Activated CD4-positive, alpha-beta T cell treated with anti-CD3 and anti-CD28 coated beads, Interleukin-2, amount 10 ng/mL, durations not matched to agents 24 days and 14 days (primary cell): ENCODE measurements at regions of chrX and their contacts with region 1.

Region 1: DNA sequence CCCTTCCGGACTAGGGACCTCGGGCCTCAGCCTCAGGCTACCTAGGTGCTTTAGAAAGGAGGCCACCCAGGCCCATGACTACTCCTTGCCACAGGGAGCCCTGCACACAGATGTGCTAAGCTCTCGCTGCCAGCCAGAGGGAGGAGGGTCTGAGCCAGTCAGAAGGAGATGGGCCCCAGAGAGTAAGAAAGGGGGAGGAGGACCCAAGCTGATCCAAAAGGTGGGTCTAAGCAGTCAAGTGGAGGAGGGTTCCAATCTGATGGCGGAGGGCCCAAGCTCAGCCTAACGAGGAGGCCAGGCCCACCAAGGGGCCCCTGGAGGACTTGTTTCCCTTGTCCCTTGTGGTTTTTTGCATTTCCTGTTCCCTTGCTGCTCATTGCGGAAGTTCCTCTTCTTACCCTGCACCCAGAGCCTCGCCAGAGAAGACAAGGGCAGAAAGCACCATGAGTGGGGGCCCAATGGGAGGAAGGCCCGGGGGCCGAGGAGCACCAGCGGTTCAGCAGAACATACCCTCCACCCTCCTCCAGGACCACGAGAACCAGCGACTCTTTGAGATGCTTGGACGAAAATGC is at the start of gene WAS:
- DNase-seq: peak; percentile 85
- H3K4me3 Mint-ChIP-seq: peak within 1 kb of the TSS; percentile 98
- H3K27ac Mint-ChIP-seq: peak within 1 kb of the TSS; percentile 98
- H3K4me1 Mint-ChIP-seq: peaks cover 43% of the 10 kb centered on the region
- H3K27me3 Mint-ChIP-seq: no peaks in the 10 kb centered on the region
- total RNA-seq, gene WAS: 99.0 and 104 TPM in 2 replicates

Region 2: DNA sequence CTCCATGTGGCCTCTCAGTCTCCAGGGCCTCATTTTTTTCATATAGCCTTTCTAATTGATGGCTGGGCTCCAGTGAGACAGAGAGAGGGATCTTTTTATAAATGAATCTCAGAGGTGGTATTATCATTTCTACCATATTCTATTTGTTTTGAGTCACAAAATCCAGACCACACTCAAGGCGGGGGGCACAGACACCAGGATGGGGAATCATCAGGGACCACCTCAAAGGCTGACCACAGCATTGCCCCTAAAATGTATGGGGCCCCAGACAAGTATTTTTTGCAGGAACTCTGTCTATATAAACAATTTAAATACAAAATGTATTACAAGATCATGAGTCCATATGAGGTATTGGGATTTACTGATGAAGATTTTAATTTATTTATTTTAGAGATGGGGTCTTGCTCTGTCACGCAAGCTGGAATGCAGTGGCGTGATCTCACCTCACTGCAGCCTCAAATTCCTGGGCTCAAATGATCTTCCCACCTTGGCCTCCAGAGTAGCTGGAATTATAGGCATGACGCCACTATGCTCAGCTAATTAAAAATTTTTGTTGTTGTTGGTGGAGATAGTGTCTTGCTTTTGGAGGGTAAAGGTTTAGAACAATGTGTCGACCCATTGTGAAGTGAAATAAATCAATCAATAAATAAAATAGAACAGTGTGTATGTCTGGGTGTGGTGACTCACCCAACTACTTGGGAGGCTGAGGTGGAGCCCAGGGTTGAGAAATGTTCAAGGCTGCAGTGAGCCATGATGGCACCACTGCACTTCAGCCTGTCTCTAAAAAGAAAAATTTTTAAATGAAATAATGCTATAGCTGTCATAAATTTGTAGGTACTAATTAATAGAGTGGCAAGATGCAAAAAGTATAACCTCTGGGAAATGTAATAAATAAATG is 56.8 kb before region 1 on chrX:
- intact Hi-C with region 1: no loop called
- DNase-seq: no peak
- H3K4me3 Mint-ChIP-seq: no peak overlapping the region
- H3K27ac Mint-ChIP-seq: no peak overlapping the region
- H3K4me1 Mint-ChIP-seq: no peaks in the 10 kb centered on the region
- H3K27me3 Mint-ChIP-seq: no peaks in the 10 kb centered on the region

Region 3: GRCh38 chrX:48696301-48697181 is 13.0 kb after region 1 on chrX and contains the start of gene SUV39H1:
- intact Hi-C with region 1: loop called (anchors 1 kb)
- DNase-seq: peak; percentile 96
- H3K4me3 Mint-ChIP-seq: peak within 1 kb of the TSS; percentile 93
- H3K27ac Mint-ChIP-seq: peak within 1 kb of the TSS; percentile 98
- H3K4me1 Mint-ChIP-seq: peaks cover 28% of the 10 kb centered on the region
- H3K27me3 Mint-ChIP-seq: no peaks in the 10 kb centered on the region
- total RNA-seq, gene SUV39H1: 27.6 and 32.2 TPM in 2 replicates

Region 4: DNA sequence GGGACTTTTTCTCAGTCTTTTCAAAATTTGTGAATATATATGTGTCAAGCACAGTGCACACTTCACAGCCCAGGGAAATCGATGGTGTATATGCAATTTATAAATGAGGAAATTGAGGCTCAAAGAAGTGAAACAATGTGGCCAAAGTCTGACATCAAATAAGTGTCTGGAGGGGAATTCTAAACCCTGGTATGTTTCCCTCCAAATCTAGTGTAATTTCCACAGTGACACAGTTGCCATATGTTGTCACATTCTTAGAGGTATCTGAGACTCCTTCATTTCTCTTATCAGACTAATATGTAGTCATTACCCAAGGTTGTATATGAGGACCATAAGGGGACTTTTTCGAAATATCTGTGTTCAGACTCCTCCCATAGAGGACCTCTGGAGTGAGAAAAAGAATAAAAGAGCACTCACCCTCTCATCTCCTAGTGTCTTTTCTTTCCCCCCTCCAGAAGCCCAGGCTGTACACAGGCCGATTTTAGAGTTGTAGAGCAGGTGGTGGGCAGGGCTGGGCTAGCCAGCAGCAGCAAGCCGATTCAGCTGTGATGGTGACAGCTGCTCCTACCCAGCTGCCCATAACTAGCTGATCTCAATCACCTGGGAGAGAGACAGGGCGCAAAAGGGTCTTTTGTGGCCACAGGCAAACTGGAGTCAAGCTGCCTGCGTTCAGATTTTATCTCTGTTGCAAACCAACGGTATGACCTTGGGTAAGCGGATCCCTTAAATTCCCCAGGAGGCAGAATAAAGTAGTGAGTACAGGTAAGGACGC is 1294.0 kb after region 1 on chrX:
- intact Hi-C with region 1: no loop called
- DNase-seq: no peak
- H3K4me3 Mint-ChIP-seq: no peak overlapping the region
- H3K27ac Mint-ChIP-seq: no peak overlapping the region
- H3K4me1 Mint-ChIP-seq: no peaks in the 10 kb centered on the region
- H3K27me3 Mint-ChIP-seq: no peaks in the 10 kb centered on the region